RWPE1 (cell line): ENCODE measurements at regions of chr17 and their contacts with region 1.

Region 1: DNA sequence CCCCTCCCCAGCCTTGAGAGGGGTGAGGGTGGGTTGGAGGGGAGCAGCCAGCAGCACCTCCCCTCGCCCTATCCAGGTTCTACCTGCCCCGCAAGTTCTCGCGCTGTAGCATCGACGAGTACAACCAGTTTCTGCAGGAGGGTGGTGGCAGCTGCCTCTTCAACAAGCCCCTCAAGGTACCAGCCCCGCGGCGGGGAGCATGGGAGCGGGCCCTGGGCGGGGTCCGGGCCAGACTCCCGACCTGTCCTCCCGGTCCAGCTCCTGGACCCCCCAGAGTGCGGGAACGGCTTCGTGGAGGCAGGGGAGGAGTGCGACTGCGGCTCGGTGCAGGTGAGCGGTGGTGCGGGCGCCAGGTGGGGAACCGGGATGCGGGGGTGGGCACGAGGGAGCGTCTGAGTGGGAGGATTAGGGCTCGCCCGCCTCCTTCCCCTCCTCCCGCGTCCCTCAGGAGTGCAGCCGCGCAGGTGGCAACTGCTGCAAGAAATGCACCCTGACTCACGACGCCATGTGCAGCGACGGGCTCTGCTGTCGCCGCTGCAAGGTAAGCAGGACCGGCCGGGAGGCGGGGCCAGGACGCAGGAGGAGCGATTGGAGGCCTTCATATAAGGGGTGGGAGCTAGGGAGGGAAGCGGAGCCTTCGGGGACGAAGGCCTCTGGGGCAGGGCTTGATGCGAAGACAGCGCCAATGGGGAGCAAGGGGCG is 16.5 kb downstream of the ADAM11 start:
- DNase-seq: peak; percentile 99
- H3K27ac ChIP-seq: peak overlapping the region; percentile 72
- CTCF ChIP-seq: peak; percentile 75

Region 2: DNA sequence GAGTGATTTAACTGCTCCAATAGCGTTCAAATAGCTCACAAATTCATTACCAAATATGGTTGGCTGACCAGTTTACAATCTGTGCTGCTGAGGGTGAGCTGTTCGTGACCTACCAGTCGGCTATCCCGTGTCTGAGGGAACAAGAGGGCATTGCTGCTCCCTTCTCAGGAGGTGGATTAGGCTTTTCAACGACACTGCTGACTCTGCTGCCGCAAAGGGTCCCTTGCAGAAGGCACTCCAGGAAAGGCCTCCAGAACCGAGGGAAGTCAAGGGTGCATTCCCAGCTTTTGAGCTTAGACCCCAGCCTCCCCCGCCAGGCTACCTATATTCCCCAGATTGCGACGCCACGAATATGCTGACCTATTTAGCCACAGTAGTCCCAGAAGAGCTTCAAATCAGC is 22.5 kb after region 1 on chr17:
- CTCF ChIA-PET with region 1: interaction called, 11 read pairs
- POLR2A ChIA-PET with region 1: no interaction called
- DNase-seq: no peak
- H3K27ac ChIP-seq: no peak overlapping the region
- CTCF ChIP-seq: no peak

Region 3: GRCh38 chr17:44830359-44831288 is 55.3 kb after region 1 on chr17:
- CTCF ChIA-PET with region 1: interaction called, 16 read pairs
- POLR2A ChIA-PET with region 1: interaction called, 8 read pairs
- DNase-seq: peak; percentile 30
- H3K27ac ChIP-seq: peak overlapping the region; percentile 86
- CTCF ChIP-seq: no peak

Region 4: GRCh38 chr17:44864866-44865660 is 89.8 kb after region 1 on chr17:
- CTCF ChIA-PET with region 1: interaction called, 94 read pairs
- POLR2A ChIA-PET with region 1: interaction called, 4 read pairs
- DNase-seq: peak; percentile 64
- H3K27ac ChIP-seq: no peak overlapping the region
- CTCF ChIP-seq: peak; percentile 90

Region 5: GRCh38 chr17:44878627-44879221 is 103.4 kb after region 1 on chr17:
- CTCF ChIA-PET with region 1: interaction called, 26 read pairs
- POLR2A ChIA-PET with region 1: no interaction called
- DNase-seq: peak; percentile 54
- H3K27ac ChIP-seq: peak overlapping the region; percentile 21; the same call in 1 of the 2 replicates
- CTCF ChIP-seq: peak; percentile 78

Region 6: GRCh38 chr17:45247429-45248131 is 472.3 kb after region 1 on chr17:
- CTCF ChIA-PET with region 1: no interaction called
- POLR2A ChIA-PET with region 1: no interaction called
- DNase-seq: peak; percentile 98
- H3K27ac ChIP-seq: peak overlapping the region; percentile 89
- CTCF ChIP-seq: no peak